Head of caudate nucleus (tissue), 42 donors: ENCODE measurements at regions of chr5 and their contacts with region 1.

Region 1: DNA sequence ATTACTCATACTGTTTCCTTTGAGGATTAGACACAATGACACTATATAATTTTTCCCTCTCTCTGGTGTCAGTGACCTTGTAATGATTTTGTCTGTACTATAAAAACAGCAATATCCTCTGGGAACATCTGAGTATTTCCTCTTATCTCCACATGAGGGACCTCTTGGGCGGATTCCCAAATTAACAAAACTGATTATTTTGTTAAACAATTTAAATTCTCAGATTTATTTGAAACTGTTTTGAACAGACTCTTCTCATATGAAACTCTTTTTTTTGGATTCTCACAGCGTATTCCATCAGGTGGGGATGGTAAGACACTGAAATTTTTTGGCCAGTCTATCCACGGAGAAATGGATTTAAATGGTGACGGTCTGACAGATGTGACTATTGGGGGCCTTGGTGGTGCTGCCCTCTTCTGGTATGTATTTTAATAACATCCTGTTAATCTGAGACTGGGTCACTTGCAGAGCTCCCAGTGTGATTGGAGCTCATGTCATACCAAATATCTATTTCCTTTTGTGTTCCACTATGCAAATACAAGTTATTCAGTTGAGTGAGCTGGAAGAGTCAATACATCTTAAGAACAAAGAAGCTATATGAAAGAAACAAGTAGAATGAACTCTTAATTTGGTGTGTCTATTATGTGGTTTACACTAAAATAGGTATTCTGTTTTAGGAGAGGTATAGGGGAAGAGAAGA is 73.8 kb upstream of the ITGA2 start:
- DNase-seq: peak in 38 of 42 donors; percentile 7 to 86 (median 50)

Region 2: GRCh38 chr5:52776116-52776515 is 139.2 kb before region 1 on chr5:
- intact Hi-C with region 1: no loop called
- DNase-seq: no peak

Region 3: GRCh38 chr5:52787600-52788504 is 127.5 kb before region 1 on chr5 and contains the starts of genes ITGA1 and PELO:
- intact Hi-C with region 1: loop called (anchors 5 kb)
- DNase-seq: peak in 41 of 42 donors; percentile 20 to 79 (median 50)